ENCODE measurements at regions of chr6 and their contacts with region 1.

Region 1: GRCh38 chr6:89432875-89433251 is at the start of gene ANKRD6:
- DNase-seq: peak; percentile 82
- ATAC-seq: peak; percentile 94
- H3K4me3 Mint-ChIP-seq: peak within 1 kb of the TSS; percentile 79
- H3K27ac Mint-ChIP-seq: peak within 1 kb of the TSS; percentile 70
- H3K4me1 Mint-ChIP-seq: peaks cover 24% of the 10 kb centered on the region
- H3K27me3 Mint-ChIP-seq: peaks cover 36% of the 10 kb centered on the region
- total RNA-seq, gene ANKRD6: 9.1 TPM

Region 2: DNA sequence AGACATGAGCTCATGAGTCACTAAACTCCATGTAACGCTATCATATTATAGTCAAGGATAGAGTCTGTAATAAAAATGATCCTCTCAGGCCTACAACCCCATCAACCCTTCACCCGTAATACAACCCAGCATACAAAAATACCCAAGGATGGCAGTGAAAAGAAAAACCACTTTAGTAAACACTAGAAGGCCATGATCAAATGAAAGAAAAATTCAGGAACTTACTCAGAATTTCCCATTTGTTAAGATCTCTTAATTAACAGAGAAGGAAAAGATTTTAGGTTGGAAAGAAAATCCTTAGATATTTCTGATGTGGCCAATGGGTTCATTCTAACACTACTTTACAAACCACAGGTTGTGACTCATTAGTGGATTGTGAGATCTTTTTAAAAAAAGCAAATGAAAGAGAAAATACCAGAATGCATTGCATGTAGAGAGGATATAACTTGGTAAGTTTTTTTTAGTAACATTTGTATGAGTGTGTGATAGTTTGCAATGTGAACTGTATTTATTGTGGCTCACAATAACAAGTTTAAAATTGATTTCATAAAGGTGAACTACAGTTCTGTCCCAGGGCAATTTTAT is 72.4 kb before region 1 on chr6:
- CTCF ChIA-PET with region 1: interaction called, 12 read pairs
- POLR2A ChIA-PET with region 1: no interaction called
- DNase-seq: no peak
- ATAC-seq: peak; percentile 62
- H3K4me3 Mint-ChIP-seq: peak overlapping the region; percentile 0
- H3K27ac Mint-ChIP-seq: peak overlapping the region; percentile 24
- H3K4me1 Mint-ChIP-seq: peaks cover 69% of the 10 kb centered on the region
- H3K27me3 Mint-ChIP-seq: no peaks in the 10 kb centered on the region

Region 3: DNA sequence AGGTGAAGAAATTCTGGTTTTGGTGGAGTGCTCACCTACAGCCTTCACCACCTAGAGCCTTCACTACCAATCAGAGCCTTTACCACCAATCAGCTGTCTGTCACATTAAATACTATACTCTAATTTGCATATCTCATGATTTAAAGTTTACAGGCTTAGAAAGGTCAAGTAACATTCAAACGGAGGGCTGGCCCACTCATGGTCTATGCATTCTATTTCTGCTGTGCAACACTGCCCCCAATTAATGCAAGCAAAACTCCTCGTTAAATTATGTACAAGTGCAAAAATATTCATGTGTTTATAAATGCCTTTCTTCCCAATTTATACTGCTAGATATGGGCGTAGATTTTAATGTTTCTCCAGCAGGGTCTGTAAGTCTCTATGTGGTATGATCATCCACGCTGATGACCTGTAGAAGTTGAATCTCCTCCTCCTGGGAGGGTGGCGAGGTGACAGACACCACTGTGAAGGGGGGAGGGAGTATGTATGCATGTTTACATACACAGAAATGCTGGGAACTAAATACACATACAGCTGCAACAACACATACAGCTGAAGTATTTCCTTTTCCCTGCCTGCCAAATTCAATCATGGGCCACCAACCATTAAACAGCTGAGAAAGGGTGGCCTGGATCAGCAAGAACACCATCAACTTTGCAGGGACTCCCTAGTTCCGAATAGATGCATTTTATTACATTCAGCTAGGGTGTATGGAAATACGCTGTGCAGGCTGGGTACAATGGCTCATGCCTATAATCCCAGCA is 33.9 kb before region 1 on chr6:
- CTCF ChIA-PET with region 1: no interaction called
- POLR2A ChIA-PET with region 1: no interaction called
- DNase-seq: no peak
- ATAC-seq: no peak
- H3K4me3 Mint-ChIP-seq: no peak overlapping the region
- H3K27ac Mint-ChIP-seq: no peak overlapping the region
- H3K4me1 Mint-ChIP-seq: no peaks in the 10 kb centered on the region
- H3K27me3 Mint-ChIP-seq: peaks cover 2% of the 10 kb centered on the region

Region 4: DNA sequence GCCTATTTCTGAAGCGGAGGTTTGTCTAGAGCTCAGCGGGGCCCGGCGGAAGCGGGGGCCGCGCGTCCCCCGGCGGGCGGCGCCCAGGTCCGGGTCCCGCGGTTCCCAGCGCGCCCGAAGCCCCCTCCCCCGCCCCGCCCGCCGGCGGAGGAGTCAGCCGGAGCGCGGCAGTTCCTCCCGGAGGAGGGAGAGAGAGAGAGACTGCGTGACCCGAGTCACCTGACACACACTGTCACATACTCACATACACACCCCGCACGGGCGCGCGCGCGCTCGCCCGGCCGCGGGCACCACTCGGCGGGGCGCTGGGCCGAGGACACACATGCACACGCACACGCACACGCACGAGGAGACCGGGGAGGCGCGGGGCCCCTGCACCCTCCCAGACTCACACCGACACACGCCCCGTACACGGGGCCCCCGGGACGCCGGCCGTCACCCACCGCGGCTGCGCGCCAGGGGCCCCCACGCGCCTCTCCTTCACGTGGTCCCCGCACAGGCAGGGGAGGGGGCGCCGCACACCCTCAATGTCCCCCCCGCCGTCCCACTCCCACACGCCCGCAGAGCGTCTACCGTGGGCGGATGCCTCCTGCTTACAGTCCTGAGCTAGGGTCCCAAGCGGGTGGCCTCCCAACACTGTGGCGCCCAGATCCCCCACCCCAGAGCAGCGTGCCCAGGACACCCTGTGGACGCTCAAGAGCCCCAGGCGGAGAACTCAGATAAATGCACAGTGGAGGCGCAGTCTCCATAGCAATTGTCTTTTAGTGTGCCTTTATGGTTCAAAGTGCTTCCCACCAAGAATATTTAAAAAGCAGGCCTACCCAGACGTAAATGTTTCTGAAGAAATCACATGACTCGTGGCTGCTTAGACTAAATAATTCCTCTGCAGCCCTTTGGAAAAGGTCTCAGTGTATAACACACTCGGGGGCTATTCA is 20.5 kb before region 1 on chr6 and contains the start of gene RRAGD:
- CTCF ChIA-PET with region 1: interaction called, 11 read pairs
- POLR2A ChIA-PET with region 1: no interaction called
- DNase-seq: peak; percentile 66
- ATAC-seq: peak; percentile 84
- H3K4me3 Mint-ChIP-seq: peak within 1 kb of the TSS; percentile 82
- H3K27ac Mint-ChIP-seq: peak within 1 kb of the TSS; percentile 72
- H3K4me1 Mint-ChIP-seq: peaks cover 14% of the 10 kb centered on the region
- H3K27me3 Mint-ChIP-seq: peaks cover 61% of the 10 kb centered on the region
- total RNA-seq, gene RRAGD: 2.5 to 3.7 TPM

Region 5: DNA sequence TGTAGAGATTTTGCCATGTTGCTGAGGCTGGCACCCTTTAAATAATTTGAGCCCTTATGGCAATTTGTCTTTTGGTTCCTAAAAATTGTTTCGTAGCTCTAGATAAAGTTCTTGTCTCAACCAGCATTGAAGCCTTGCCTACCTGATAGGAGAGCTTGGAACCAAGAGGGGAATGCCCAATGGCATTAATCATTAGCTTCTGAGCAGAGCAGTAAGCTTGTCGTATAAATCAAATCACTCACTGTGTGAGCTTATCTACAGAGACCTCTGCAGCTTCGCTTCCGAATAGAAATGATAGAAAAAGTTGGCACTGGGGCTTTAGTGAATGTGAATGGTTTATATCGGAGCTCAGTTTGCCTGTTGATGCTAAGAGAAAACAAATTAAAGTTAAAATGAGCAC is 10.8 kb after region 1 on chr6:
- CTCF ChIA-PET with region 1: interaction called, 13 read pairs
- POLR2A ChIA-PET with region 1: interaction called, 3 read pairs
- DNase-seq: no peak
- ATAC-seq: no peak
- H3K4me3 Mint-ChIP-seq: no peak overlapping the region
- H3K27ac Mint-ChIP-seq: no peak overlapping the region
- H3K4me1 Mint-ChIP-seq: no peaks in the 10 kb centered on the region
- H3K27me3 Mint-ChIP-seq: peaks cover 7% of the 10 kb centered on the region

Region 6: GRCh38 chr6:89610149-89610642 is 177.3 kb after region 1 on chr6:
- CTCF ChIA-PET with region 1: interaction called, 82 read pairs
- POLR2A ChIA-PET with region 1: no interaction called
- DNase-seq: peak; percentile 85
- ATAC-seq: peak; percentile 88
- H3K4me3 Mint-ChIP-seq: no peak overlapping the region
- H3K27ac Mint-ChIP-seq: no peak overlapping the region
- H3K4me1 Mint-ChIP-seq: peaks cover 24% of the 10 kb centered on the region
- H3K27me3 Mint-ChIP-seq: no peaks in the 10 kb centered on the region

Region 7: GRCh38 chr6:89630488-89630887 is 197.6 kb after region 1 on chr6:
- CTCF ChIA-PET with region 1: interaction called, 11 read pairs
- POLR2A ChIA-PET with region 1: no interaction called
- DNase-seq: peak; percentile 18
- ATAC-seq: no peak
- H3K4me3 Mint-ChIP-seq: no peak overlapping the region
- H3K27ac Mint-ChIP-seq: no peak overlapping the region
- H3K4me1 Mint-ChIP-seq: no peaks in the 10 kb centered on the region
- H3K27me3 Mint-ChIP-seq: no peaks in the 10 kb centered on the region

Region 8: DNA sequence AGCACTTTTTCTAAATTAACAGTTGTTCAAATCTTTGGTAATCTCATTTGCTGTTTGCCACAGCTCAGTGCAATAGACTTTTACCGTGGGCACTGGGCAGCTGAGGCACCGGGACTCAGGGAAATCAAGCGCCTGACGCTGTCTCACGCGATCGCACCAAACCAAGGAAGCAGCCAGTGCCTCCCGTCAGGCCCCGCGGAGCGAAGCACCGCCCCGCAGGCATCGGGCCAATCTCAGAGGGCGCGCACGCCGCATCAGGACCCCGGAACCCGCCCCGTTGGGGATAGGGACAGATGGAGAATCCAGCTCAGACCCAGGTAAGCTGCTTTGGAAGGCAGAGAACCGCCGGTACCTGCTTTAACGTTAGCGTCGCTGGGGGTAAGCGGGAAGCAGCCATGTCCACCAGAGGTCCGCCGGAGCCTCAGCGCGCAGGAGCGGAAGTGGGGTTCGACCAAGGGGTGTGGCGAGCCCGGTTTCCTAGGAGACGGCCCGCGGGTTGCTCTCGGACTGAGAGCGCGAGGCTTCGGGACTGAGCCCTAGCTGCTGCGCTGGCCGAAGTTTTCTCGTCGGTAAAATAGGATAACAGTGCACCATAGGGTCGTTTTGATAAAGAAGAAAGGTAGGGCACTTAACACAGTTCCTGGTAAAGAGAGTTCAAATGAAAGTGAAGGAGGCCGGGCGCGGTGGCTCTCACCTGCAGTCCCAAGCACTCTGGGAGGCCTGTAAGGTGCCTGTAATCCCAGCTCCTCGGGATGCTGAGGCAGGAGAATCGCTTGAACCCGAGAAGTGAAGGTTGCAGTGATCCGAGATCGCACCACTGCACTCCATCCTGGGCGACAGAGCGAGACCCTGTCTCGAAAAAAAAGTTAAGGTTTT is 205.7 kb after region 1 on chr6 and contains the start of gene LYRM2:
- CTCF ChIA-PET with region 1: interaction called, 15 read pairs
- POLR2A ChIA-PET with region 1: no interaction called
- DNase-seq: peak; percentile 94
- ATAC-seq: peak; percentile 97
- H3K4me3 Mint-ChIP-seq: peak within 1 kb of the TSS; percentile 93
- H3K27ac Mint-ChIP-seq: peak within 1 kb of the TSS; percentile 98
- H3K4me1 Mint-ChIP-seq: peaks cover 32% of the 10 kb centered on the region
- H3K27me3 Mint-ChIP-seq: no peaks in the 10 kb centered on the region
- total RNA-seq, gene LYRM2: 29.2 to 29.5 TPM

Measured in activated CD8-positive, alpha-beta T cell treated with anti-CD3 and anti-CD28 coated beads, Interleukin-2, amount 10 ng/mL, durations not matched to agents 7 days and 5 days (primary cell).